Naive thymus-derived CD4-positive, alpha-beta T cell (primary cell): ENCODE measurements at regions of chr17 and their contacts with region 1.

Region 1: DNA sequence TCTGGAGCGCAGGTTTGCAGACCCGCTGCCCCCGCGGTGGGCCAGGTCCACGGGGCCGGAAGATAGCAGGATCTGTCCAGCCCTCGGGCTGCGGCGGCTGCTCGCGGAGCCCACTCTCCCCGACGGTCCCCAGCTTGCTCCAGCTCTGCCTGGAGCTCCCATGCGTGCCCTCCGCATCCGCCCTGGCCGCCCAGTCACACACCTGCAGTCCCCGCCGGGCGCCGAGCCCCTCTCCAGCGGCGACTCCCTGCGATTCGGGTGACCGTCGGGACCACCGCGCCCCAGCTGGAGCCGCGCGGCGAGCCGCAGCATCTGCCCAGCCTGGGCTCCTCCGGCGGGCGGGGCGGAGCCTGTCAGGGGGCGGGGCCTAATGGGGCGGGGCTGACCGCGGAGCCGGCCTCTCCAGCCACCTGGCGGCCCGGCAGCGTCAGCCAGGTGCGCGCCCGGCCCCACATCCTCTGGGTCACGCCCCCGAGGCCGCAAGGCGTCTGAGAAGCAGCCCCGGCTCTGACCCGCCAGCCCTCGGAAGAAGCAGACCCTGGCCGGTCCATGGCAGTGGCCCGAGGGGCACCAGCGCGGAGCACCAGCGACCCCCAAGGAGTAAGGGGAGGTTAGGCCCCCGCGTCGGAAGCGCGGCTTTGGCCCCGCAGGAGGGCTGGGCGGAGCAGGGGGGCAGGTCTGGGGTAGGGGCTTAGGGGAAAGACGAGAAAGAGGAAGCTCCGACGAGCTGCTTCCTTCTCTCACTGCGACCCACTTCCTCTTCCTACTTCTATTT is at the start of gene PIK3R5:
- DNase-seq: peak; percentile 71 to 82 (median 78)
- ATAC-seq: peak; percentile 89
- H3K4me3 ChIP-seq: peak within 1 kb of the TSS; percentile 81
- H3K4me3 Mint-ChIP-seq: peak within 1 kb of the TSS; percentile 86 to 100 (median 98)
- H3K27ac ChIP-seq: peak within 1 kb of the TSS; percentile 84
- H3K27ac Mint-ChIP-seq: peak within 1 kb of the TSS; percentile 80 to 98 (median 94)
- H3K4me1 ChIP-seq: peaks cover 34 to 35% of the 10 kb centered on the region in 2 donors
- H3K4me1 Mint-ChIP-seq: peaks cover 31 to 56% (median 46%) of the 10 kb centered on the region in 7 donors
- H3K27me3 ChIP-seq: no peaks in the 10 kb centered on the region
- H3K27me3 Mint-ChIP-seq: no peaks in the 10 kb centered on the region
- total RNA-seq, gene PIK3R5: 73.5 to 231 (median 77.6) TPM

Region 2: DNA sequence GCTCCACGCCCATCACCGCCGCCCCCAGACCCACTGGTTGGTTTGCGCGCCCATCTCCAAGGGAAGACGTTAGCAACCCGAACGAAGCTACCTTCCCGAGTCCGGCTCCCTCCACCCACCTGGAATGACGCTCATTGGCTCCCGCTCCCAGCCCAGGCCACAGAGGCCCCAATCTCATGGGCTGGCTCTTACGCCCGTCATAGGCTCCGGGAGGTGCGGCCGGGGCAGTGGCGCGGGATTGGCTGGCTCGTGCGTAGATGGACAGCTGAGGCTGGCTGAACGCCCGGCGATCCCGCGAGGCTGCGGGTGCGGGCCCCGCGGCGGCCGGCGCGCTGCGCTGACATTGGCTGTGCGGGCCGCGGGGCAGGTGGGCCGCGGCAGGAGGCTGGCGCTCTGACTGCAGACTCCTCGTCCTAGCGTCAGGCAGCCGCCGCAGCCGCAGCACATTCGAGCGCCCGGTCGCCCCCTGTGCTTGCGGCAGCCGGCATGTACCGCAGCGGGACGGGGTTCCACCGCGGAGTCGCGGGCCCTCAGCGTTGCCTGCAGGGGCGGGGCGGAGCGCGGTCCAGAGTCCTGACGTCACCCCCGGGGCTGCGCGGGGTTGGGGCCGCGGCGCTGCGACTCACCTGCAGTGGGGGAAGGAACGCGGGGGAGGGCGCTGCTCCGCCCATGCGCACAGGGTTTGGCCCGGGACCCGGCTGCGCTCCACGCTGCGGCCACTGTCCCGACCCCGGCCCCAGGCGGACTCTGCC is 334.6 kb before region 1 on chr17:
- CTCF ChIA-PET with region 1: no interaction called
- POLR2A ChIA-PET with region 1: no interaction called
- intact Hi-C with region 1: loop called in 1 of 2 experiments (anchors 1 kb)
- DNase-seq: peak; percentile 63 to 91 (median 82)
- ATAC-seq: peak; percentile 97
- H3K4me3 ChIP-seq: peak overlapping the region; percentile 64
- H3K4me3 Mint-ChIP-seq: peak overlapping the region; percentile 91 to 100 (median 99)
- H3K27ac ChIP-seq: peak overlapping the region; percentile 66
- H3K27ac Mint-ChIP-seq: peak overlapping the region in 7 of 9 donors; percentile 35 to 95 (median 80)
- H3K4me1 ChIP-seq: peaks cover 5% of the 10 kb centered on the region in 2 donors
- H3K4me1 Mint-ChIP-seq: peaks cover 0 to 18% (median 13%) of the 10 kb centered on the region in 7 donors
- H3K27me3 ChIP-seq: peaks cover 3 to 4% of the 10 kb centered on the region in 2 donors
- H3K27me3 Mint-ChIP-seq: peaks cover 30 to 67% (median 51%) of the 10 kb centered on the region in 5 donors

Region 3: GRCh38 chr17:8776881-8777280 is 188.7 kb before region 1 on chr17:
- CTCF ChIA-PET with region 1: no interaction called
- POLR2A ChIA-PET with region 1: no interaction called
- intact Hi-C with region 1: no loop called
- DNase-seq: no peak
- ATAC-seq: no peak
- H3K4me3 ChIP-seq: no peak overlapping the region
- H3K4me3 Mint-ChIP-seq: no peak overlapping the region
- H3K27ac ChIP-seq: no peak overlapping the region
- H3K27ac Mint-ChIP-seq: no peak overlapping the region
- H3K4me1 ChIP-seq: no peaks in the 10 kb centered on the region
- H3K4me1 Mint-ChIP-seq: peaks cover 0 to 4% (median 0%) of the 10 kb centered on the region in 7 donors
- H3K27me3 ChIP-seq: peaks cover 2 to 3% of the 10 kb centered on the region in 2 donors
- H3K27me3 Mint-ChIP-seq: peaks cover 11 to 53% (median 29%) of the 10 kb centered on the region in 5 donors

Region 4: GRCh38 chr17:8900626-8901585 is 64.7 kb before region 1 on chr17:
- CTCF ChIA-PET with region 1: interaction called, 13 read pairs
- POLR2A ChIA-PET with region 1: interaction called, 20 read pairs
- intact Hi-C with region 1: loop called (anchors 1 kb)
- DNase-seq: peak in 8 of 9 donors; percentile 5 to 49 (median 33)
- ATAC-seq: no peak
- H3K4me3 ChIP-seq: no peak overlapping the region
- H3K4me3 Mint-ChIP-seq: peak overlapping the region; percentile 12 to 83 (median 64)
- H3K27ac ChIP-seq: peak overlapping the region; percentile 80
- H3K27ac Mint-ChIP-seq: peak overlapping the region in 8 of 9 donors; percentile 78 to 99 (median 96)
- H3K4me1 ChIP-seq: peaks cover 45 to 58% of the 10 kb centered on the region in 2 donors
- H3K4me1 Mint-ChIP-seq: peaks cover 52 to 78% (median 66%) of the 10 kb centered on the region in 7 donors
- H3K27me3 ChIP-seq: no peaks in the 10 kb centered on the region
- H3K27me3 Mint-ChIP-seq: no peaks in the 10 kb centered on the region

Region 5: DNA sequence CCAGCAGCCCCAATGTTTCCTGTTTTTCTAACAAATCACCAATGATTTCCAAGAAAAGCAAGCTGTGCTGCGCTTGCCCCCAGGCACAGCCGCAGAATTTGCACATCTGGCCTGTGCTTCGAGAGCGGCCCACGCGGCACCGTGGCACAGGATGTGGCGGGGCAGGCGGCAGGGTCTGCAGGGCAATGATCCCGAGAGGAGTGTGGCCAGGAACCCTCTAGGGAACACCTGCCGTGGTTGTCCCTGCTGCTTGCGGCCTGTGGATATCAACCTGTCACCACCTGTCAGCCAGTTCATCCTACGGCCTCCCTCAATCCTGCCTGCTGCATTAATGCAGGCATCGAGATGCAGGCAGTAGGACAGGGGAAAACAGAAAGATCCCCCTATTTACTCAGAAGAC is 24.1 kb before region 1 on chr17:
- CTCF ChIA-PET with region 1: no interaction called
- POLR2A ChIA-PET with region 1: interaction called, 116 read pairs
- intact Hi-C with region 1: loop called (anchors 1 kb)
- DNase-seq: peak in 8 of 9 donors; percentile 54 to 82 (median 76)
- ATAC-seq: peak; percentile 73
- H3K4me3 ChIP-seq: peak overlapping the region; percentile 46
- H3K4me3 Mint-ChIP-seq: peak overlapping the region; percentile 62 to 86 (median 78)
- H3K27ac ChIP-seq: peak overlapping the region; percentile 65
- H3K27ac Mint-ChIP-seq: peak overlapping the region; percentile 88 to 98 (median 97)
- H3K4me1 ChIP-seq: peaks cover 52 to 73% of the 10 kb centered on the region in 2 donors
- H3K4me1 Mint-ChIP-seq: peaks cover 50 to 96% (median 84%) of the 10 kb centered on the region in 7 donors
- H3K27me3 ChIP-seq: no peaks in the 10 kb centered on the region
- H3K27me3 Mint-ChIP-seq: no peaks in the 10 kb centered on the region

Region 6: DNA sequence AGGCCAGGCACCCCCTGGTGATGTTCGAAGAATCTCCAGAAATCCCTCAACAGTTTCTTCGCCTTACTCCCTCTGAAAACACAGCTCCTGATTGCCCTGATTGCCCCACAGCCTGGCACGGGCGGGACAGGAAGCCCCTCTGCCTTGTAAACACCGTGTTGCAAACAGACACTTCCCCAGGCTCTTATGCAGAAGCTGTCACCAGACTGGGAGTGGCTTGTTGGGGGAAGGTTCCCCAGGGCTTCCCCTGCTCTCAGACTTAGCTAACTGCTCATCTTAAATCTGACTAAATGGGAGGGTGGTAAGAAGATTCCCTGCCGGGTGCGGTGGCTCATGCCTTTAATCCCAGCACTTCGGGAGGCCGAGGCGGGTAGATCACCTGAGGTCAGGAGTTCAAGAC is 11.2 kb before region 1 on chr17:
- CTCF ChIA-PET with region 1: interaction called, 3 read pairs
- POLR2A ChIA-PET with region 1: interaction called, 116 read pairs
- intact Hi-C with region 1: loop called (anchors 1 kb)
- DNase-seq: peak; percentile 52 to 93 (median 83)
- ATAC-seq: peak; percentile 95
- H3K4me3 ChIP-seq: peak overlapping the region; percentile 33
- H3K4me3 Mint-ChIP-seq: peak overlapping the region; percentile 76 to 94 (median 86)
- H3K27ac ChIP-seq: peak overlapping the region; percentile 70
- H3K27ac Mint-ChIP-seq: peak overlapping the region; percentile 84 to 98 (median 96)
- H3K4me1 ChIP-seq: peaks cover 81 to 99% of the 10 kb centered on the region in 2 donors
- H3K4me1 Mint-ChIP-seq: peaks cover 78 to 100% (median 98%) of the 10 kb centered on the region in 7 donors
- H3K27me3 ChIP-seq: no peaks in the 10 kb centered on the region
- H3K27me3 Mint-ChIP-seq: no peaks in the 10 kb centered on the region